ENCODE measurements at regions of chr3 and their contacts with region 1.

Region 1: DNA sequence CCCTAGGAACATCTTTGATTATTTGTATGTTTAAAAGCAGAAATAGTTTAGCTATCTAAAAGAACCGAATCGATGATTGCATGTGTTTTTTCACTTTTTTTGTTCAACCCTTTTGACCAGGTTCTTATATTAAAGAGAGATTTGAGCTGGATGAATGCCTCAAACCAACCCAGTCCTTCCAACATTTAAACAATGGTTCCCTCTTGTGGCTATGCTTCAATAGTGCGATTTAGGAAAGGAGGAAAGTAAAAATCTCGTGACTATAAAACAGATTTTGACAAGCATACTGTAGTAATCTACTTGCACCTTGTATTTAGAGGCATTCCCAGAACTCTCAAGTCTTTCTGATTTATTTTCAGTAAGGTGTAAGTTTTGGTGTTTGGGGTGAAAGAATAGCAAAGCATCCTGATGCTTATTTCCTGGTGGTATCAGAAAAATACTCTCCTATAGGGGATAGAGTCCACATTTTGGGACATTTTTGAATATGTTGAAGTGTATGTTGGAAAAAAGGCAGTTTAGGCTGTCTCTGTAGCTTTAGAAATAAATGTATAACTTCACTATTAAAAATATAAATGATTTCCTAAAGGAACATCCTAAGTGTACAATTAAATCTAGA is 159.6 kb upstream of the KCNH8 start:
- DNase-seq: peak; percentile 72
- H3K4me3 Mint-ChIP-seq: peak overlapping the region; percentile 83
- H3K27ac Mint-ChIP-seq: peak overlapping the region; percentile 81
- H3K4me1 Mint-ChIP-seq: peaks cover 24% of the 10 kb centered on the region
- H3K27me3 Mint-ChIP-seq: peaks cover 7% of the 10 kb centered on the region

Region 2: GRCh38 chr3:17841190-17841828 is 1147.4 kb before region 1 on chr3:
- intact Hi-C with region 1: loop called (anchors 2 kb)
- DNase-seq: peak; percentile 92
- H3K4me3 Mint-ChIP-seq: no peak overlapping the region
- H3K27ac Mint-ChIP-seq: no peak overlapping the region
- H3K4me1 Mint-ChIP-seq: no peaks in the 10 kb centered on the region
- H3K27me3 Mint-ChIP-seq: peaks cover 11% of the 10 kb centered on the region

Region 3: DNA sequence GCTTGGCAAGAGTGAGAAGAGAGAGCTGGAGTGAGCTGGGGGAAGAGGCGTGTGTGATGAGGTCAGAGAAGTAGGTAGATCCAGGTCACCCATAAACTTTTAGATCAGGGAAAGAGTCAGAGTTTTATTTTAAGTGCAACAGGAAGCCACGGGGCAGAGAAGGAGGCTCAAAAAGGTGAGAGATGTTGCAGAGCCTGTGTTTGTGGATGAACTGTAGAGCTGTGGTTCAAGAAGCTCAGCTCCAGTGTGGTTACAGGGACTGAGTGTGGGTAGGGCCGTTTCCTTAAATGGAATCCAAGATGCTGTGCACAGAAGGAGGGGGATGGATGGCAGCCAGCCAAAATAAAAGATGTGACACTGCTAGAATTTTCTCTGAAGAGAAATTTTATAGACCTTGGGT is 900.7 kb before region 1 on chr3:
- intact Hi-C with region 1: no loop called
- DNase-seq: no peak
- H3K4me3 Mint-ChIP-seq: no peak overlapping the region
- H3K27ac Mint-ChIP-seq: peak overlapping the region; percentile 7
- H3K4me1 Mint-ChIP-seq: peaks cover 8% of the 10 kb centered on the region
- H3K27me3 Mint-ChIP-seq: peaks cover 5% of the 10 kb centered on the region

Region 4: DNA sequence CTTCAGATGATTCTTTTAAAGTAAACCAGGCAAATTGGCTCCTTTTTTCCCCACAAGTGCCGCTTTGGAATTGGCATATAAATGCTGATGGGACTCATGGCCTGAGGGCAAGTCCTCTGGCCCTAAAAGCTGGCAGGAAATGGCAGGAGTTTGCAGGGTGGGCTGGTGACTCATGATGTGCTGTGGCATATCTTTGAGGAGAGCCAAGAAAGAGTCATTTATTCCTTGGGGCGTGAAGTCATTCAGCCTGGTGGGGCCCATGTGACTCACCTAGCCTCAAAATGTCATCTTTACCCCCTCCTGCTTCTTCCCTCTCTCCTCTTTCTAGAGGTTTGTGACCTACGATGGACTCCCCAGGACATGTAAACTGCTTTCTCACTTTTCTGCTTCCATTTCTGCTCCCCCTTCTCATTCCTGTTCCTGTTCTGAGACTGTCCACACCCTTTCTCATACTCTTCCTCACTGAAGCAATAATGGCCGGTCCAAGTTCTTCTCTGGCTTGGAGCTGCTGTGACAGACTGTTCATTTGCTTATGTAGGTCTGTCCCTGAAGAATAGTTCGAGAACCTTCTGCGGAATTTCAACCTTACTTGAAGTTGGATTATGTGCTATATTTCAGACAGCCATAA is 889.6 kb before region 1 on chr3:
- intact Hi-C with region 1: loop called (anchors 5 kb)
- DNase-seq: peak; percentile 57
- H3K4me3 Mint-ChIP-seq: peak overlapping the region; percentile 11
- H3K27ac Mint-ChIP-seq: peak overlapping the region; percentile 76
- H3K4me1 Mint-ChIP-seq: peaks cover 18% of the 10 kb centered on the region
- H3K27me3 Mint-ChIP-seq: peaks cover 1% of the 10 kb centered on the region

Region 5: DNA sequence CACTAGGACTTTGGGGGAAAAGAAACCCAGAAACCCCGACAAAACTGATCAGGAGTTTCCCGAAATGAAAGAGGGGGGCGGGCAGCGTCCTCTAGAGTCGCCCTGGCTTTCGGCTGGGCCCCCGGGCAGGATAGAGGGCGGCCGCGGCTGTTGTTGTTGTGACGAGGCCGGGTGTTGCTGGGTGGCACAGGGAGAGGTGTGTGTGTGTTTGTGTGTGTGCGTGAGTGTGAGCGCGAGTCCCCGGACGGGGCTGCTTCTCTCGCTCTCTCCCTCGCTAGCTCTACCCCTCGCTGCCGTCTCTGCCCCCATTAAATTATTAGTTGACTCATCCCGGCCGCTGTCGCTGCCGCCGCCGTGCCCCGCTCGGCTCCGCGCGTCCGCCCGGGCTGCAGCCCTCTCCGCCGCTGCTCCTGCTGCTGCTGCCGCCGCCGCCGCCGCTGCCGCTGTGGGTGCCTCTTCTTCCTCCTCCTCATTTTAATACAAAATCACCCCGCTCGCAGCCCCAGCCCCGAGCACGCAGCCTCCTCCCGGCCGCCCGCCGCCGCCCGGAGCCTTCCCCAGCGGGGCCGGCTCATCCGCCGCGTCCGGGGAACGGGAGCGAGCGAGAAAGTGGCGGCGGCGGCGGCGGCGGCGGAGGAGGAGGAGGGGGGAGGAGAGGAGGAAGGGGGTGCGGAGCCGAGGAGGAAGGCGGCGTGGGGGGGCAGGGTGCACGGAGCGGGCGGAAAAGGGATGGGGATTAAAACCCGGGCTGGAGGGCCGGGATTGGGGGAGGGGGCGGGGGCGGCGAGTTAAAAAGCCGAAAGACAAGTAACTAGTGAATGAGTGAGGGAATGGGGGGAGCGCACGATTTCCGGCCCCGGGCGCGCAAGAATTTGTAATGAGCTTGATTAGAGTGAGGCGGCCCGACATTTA is 563.7 kb before region 1 on chr3 and contains the start of gene SATB1:
- intact Hi-C with region 1: loop called (anchors 5 kb)
- DNase-seq: peak; percentile 91
- H3K4me3 Mint-ChIP-seq: peak within 1 kb of the TSS; percentile 83
- H3K27ac Mint-ChIP-seq: peak within 1 kb of the TSS; percentile 98
- H3K4me1 Mint-ChIP-seq: peaks cover 55% of the 10 kb centered on the region
- H3K27me3 Mint-ChIP-seq: peaks cover 2% of the 10 kb centered on the region
- total RNA-seq, gene SATB1: 561 and 571 TPM in 2 replicates

Region 6: DNA sequence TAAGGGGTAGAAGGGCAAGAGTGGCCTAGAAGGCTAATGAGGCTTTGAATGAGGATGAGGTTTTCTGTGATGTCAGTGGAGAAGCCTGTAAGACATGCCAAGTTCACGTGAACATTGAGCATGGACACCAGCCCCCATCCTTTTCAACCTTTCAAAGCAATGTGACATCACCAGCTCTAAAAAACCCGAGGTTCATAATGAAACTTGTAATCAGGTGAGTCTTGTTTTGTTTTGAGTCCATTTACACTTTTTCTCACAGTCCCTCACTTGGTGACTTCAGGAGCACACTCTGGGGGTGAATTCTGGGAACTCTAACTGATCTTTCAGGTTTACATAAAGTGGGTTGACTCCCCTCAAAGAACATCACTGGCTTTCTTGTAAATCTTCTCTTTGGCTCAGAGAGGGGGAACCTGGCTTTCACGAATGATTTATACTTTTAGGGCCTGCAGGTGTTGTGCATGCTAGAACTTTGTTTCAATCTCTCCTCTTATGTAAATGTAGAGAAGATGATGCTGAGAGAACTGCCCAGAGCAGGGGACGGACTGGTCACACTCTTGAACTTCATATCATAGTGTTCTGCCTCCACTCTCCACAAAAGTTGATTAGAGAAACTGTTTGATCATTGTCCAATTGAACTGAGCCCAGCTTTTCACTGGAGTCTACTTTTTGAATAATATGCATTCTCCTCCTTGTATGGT is 338.9 kb before region 1 on chr3:
- intact Hi-C with region 1: loop called (anchors 10 kb)
- DNase-seq: peak; percentile 89
- H3K4me3 Mint-ChIP-seq: peak overlapping the region; percentile 61
- H3K27ac Mint-ChIP-seq: peak overlapping the region; percentile 93
- H3K4me1 Mint-ChIP-seq: peaks cover 73% of the 10 kb centered on the region
- H3K27me3 Mint-ChIP-seq: no peaks in the 10 kb centered on the region

Region 7: DNA sequence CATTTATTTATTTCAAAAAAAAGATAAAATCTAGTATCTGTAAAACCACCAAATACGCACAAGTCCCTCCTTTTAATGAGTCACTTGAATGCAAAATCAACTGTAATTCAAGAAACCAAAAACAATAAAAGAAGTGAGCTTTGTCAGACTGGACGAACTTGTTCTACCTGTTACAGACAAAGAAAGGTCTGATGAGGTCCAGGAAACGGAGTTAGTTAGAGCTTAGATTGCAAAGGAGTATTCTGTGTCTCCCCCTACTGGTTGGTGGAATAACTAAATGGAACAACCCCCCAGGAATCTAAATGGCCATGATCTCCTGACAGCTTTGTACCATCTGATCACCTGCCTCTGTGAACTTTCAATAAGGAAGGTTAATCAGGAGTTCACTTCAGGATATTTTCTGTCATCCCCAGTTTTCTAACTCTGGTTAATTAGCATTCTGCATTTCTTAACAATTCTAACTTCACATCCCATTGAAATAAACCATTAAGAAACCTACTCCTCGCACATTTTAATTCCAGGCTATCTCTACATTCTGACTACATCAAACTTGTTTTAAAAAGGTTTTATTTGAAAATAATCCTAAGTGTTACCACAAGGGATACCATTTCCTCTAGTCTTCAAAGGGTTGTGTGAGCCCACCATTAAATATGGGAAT is 230.5 kb before region 1 on chr3:
- intact Hi-C with region 1: loop called (anchors 5 kb)
- DNase-seq: peak; percentile 88
- H3K4me3 Mint-ChIP-seq: peak overlapping the region; percentile 27
- H3K27ac Mint-ChIP-seq: peak overlapping the region; percentile 74
- H3K4me1 Mint-ChIP-seq: peaks cover 38% of the 10 kb centered on the region
- H3K27me3 Mint-ChIP-seq: no peaks in the 10 kb centered on the region

Region 8: GRCh38 chr3:18847583-18848197 is 141.0 kb before region 1 on chr3:
- intact Hi-C with region 1: loop called (anchors 1 kb)
- DNase-seq: no peak
- H3K4me3 Mint-ChIP-seq: no peak overlapping the region
- H3K27ac Mint-ChIP-seq: no peak overlapping the region
- H3K4me1 Mint-ChIP-seq: peaks cover 19% of the 10 kb centered on the region
- H3K27me3 Mint-ChIP-seq: no peaks in the 10 kb centered on the region

Measured in activated CD4-positive, alpha-beta T cell treated with anti-CD3 and anti-CD28 coated beads, Interleukin-2, amount 10 ng/mL, durations not matched to agents 24 days and 14 days (primary cell).